Activated B cell treated with CpG ODN at 0.5 μM for 24 hours (primary cell): ENCODE measurements at regions of chr10 and their contacts with region 1.

Region 1: DNA sequence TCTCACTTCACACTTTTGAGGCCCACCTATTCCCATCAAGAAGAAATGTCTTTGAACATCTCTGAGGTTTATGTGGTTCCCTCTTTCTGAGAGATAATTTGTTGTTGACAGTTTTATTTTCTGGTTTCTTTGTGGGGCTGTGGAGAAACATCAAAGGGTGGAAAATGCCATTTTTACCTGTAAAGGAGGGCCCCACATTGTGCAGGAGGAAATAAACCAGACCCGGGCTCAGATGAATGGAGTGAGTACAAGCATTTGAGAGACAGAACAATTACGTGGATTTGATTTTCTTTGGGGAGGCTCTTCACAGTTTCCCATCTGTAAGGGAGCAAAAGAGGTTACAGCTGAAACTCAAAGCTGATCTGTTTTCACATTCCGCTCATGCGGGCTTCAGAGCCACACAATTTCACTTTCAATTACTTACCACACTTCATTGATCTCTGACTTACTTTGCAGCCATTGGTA is 29.8 kb downstream of the ITPRIP start:
- DNase-seq: no peak
- ATAC-seq: peak; percentile 19
- H3K4me3 Mint-ChIP-seq: no peak overlapping the region
- H3K27ac Mint-ChIP-seq: peak overlapping the region; percentile 64
- H3K4me1 Mint-ChIP-seq: peaks cover 23% of the 10 kb centered on the region
- H3K27me3 Mint-ChIP-seq: no peaks in the 10 kb centered on the region
- CTCF ChIP-seq: no peak

Region 2: GRCh38 chr10:104231784-104232612 is 76.5 kb before region 1 on chr10 and contains the start of gene CFAP43:
- CTCF ChIA-PET with region 1: no interaction called
- POLR2A ChIA-PET with region 1: no interaction called
- intact Hi-C with region 1: no loop called
- DNase-seq: peak; percentile 96
- ATAC-seq: peak; percentile 100
- H3K4me3 Mint-ChIP-seq: peak within 1 kb of the TSS; percentile 83
- H3K27ac Mint-ChIP-seq: peak within 1 kb of the TSS; percentile 41
- H3K4me1 Mint-ChIP-seq: peaks cover 12% of the 10 kb centered on the region
- H3K27me3 Mint-ChIP-seq: peaks cover 16% of the 10 kb centered on the region
- CTCF ChIP-seq: no peak
- total RNA-seq, gene CFAP43: 0.22 TPM in 1 of 2 replicates, not detected in the other

Region 3: GRCh38 chr10:104322416-104322782 is 13.9 kb after region 1 on chr10:
- CTCF ChIA-PET with region 1: interaction called, 18 read pairs
- POLR2A ChIA-PET with region 1: no interaction called
- intact Hi-C with region 1: loop called (anchors 2 kb)
- DNase-seq: no peak
- ATAC-seq: peak; percentile 67
- H3K4me3 Mint-ChIP-seq: peak overlapping the region; percentile 52
- H3K27ac Mint-ChIP-seq: peak overlapping the region; percentile 82
- H3K4me1 Mint-ChIP-seq: peaks cover 98% of the 10 kb centered on the region
- H3K27me3 Mint-ChIP-seq: no peaks in the 10 kb centered on the region
- CTCF ChIP-seq: no peak

Region 4: DNA sequence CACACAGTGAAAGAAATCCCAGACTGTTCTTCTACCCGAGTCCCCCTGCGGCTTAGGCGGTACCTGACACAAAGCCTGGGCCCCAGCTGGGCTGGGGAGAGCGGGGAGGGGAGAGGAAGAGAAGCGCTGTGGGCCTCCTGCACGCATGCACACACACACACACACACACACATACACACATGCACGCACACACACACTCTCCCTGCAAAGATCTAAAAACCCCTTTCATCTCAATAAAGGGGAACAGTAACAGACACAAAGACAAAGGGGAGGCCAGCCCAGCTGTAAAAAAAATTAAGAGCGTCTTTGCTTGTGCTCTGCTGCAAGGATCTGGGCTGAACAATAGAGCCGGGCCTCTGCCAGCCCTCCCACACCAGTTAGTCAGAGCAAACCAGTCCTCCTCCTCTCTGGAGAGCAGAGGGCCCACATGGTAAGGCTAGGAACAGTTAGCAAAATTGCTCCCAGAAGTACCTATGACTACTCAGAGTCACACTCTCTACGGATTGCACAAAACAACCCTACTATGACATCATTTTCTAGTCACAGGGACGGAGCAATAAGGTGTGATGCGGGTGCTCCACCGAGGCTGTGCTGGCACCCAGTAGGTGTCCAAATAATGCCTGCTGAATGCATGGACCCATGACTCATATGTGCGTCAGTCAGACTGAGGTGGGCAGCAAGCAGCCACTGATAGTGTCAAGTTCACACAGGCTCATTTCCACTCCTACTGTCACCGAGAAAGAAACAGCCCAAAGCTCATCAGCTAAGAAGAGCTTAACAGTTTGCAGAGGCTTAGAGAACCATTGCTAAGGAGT is 20.6 kb after region 1 on chr10:
- CTCF ChIA-PET with region 1: interaction called, 6 read pairs
- POLR2A ChIA-PET with region 1: interaction called, 11 read pairs
- intact Hi-C with region 1: loop called (anchors 2 kb)
- DNase-seq: peak; percentile 44
- ATAC-seq: peak; percentile 82
- H3K4me3 Mint-ChIP-seq: peak overlapping the region; percentile 50
- H3K27ac Mint-ChIP-seq: peak overlapping the region; percentile 72
- H3K4me1 Mint-ChIP-seq: peaks cover 95% of the 10 kb centered on the region
- H3K27me3 Mint-ChIP-seq: no peaks in the 10 kb centered on the region
- CTCF ChIP-seq: no peak

Region 5: GRCh38 chr10:104337974-104338735 is 29.7 kb after region 1 on chr10 and contains the start of gene ITPRIP:
- CTCF ChIA-PET with region 1: interaction called, 23 read pairs
- POLR2A ChIA-PET with region 1: interaction called, 32 read pairs
- intact Hi-C with region 1: loop called (anchors 1 kb)
- DNase-seq: peak; percentile 67
- ATAC-seq: peak; percentile 65
- H3K4me3 Mint-ChIP-seq: peak within 1 kb of the TSS; percentile 98
- H3K27ac Mint-ChIP-seq: peak within 1 kb of the TSS; percentile 100
- H3K4me1 Mint-ChIP-seq: peaks cover 55% of the 10 kb centered on the region
- H3K27me3 Mint-ChIP-seq: no peaks in the 10 kb centered on the region
- CTCF ChIP-seq: no peak
- total RNA-seq, gene ITPRIP: 21.3 and 26.1 TPM in 2 replicates

Region 6: GRCh38 chr10:104347295-104348045 is 39.0 kb after region 1 on chr10:
- CTCF ChIA-PET with region 1: interaction called, 208 read pairs
- POLR2A ChIA-PET with region 1: interaction called, 22 read pairs
- intact Hi-C with region 1: loop called (anchors 1 kb)
- DNase-seq: no peak
- ATAC-seq: no peak
- H3K4me3 Mint-ChIP-seq: no peak overlapping the region
- H3K27ac Mint-ChIP-seq: peak overlapping the region; percentile 67
- H3K4me1 Mint-ChIP-seq: peaks cover 31% of the 10 kb centered on the region
- H3K27me3 Mint-ChIP-seq: no peaks in the 10 kb centered on the region
- CTCF ChIP-seq: no peak